Panc1 (cell line): ENCODE measurements at regions of chr4 and their contacts with region 1.

Region 1: GRCh38 chr4:154551872-154552686 is 1.9 kb upstream of the PLRG1 start:
- DNase-seq: peak; percentile 56
- ATAC-seq: peak; percentile 77
- H3K4me3 ChIP-seq: no peak overlapping the region
- H3K27ac ChIP-seq: no peak overlapping the region
- H3K4me1 ChIP-seq: peaks cover 8% of the 10 kb centered on the region
- H3K27me3 ChIP-seq: no peaks in the 10 kb centered on the region
- CTCF ChIP-seq: peak; percentile 81

Region 2: DNA sequence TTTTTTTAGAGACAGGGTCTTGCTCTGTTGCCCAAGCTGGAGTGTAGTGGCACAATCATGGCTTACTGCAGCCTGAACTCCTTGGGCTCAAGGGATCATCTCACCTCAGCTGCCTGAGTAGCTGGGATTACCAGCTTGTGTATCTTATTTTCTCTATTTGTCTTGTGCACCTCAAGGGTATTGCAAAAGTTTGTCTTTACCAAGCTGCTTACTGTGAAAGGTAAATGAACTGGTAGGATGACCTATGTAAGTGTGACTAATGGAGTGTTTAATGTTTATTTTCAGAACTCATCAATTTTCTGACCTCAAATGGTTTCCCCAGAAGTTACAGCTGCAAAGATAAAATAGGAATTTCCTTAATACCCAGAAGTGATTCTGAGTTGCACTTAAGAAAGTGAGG is 43.7 kb after region 1 on chr4:
- CTCF ChIA-PET with region 1: no interaction called
- POLR2A ChIA-PET with region 1: interaction called, 13 read pairs
- in situ Hi-C with region 1: no loop called
- intact Hi-C with region 1: no loop called
- DNase-seq: no peak
- ATAC-seq: no peak
- H3K4me3 ChIP-seq: no peak overlapping the region
- H3K27ac ChIP-seq: no peak overlapping the region
- H3K4me1 ChIP-seq: no peaks in the 10 kb centered on the region
- H3K27me3 ChIP-seq: no peaks in the 10 kb centered on the region
- CTCF ChIP-seq: no peak